ENCODE measurements at regions of chr18 and their contacts with region 1.

Region 1: DNA sequence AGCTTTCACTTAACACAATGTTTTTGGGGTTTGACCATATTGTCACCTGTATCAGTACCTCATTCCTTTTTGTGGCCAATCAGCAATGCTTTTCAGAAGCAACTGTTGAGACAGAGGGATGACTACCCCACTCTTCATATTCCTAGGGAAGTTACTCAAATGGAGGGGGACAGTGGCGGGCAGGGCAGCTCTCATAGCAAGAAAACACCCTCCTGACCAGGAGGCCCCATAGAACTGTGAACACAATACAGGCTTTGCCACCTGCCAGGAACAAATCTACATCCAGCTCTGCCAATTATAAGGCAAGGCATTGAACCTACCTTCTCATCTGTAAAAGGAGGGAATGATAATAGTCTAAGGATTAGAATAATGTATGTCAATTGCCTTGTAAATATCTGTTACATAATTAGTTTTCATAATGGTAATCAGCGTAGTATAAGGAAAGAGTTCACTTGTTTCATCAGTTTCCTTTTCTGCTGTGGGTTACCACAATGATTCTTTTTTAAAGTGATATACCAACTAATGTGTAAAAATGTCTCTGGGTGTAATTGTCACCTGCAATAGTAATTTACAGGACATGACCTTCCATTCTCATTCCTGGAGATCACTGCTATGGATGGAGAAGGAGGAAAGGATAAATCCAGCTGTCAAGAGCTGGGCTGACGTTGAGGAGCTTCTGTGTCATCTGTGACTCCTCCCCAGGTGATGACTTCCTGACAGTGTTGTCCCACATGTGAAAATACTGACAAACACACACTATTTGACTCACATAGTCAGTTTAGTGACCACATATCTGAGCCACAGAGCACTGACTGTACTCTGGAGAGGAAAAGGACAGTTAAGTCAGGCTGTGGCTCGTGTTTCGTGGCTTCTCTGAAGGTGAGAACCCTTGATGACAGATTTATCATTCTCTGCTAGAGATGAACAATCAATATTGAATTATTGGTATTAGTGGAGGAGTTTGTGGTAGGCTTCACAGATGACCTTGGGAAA is 13.5 kb downstream of the ALPK2 start:
- DNase-seq: peak in 8 of 9 donors; percentile 15 to 65 (median 50)
- ATAC-seq: peak; percentile 92
- H3K4me3 ChIP-seq: peak overlapping the region; percentile 11
- H3K4me3 Mint-ChIP-seq: peak overlapping the region; percentile 67 to 88 (median 81)
- H3K27ac ChIP-seq: peak overlapping the region; percentile 65
- H3K27ac Mint-ChIP-seq: peak overlapping the region; percentile 85 to 98 (median 95)
- H3K4me1 ChIP-seq: peaks cover 23 to 36% of the 10 kb centered on the region in 2 donors
- H3K4me1 Mint-ChIP-seq: peaks cover 32 to 58% (median 48%) of the 10 kb centered on the region in 7 donors
- H3K27me3 ChIP-seq: no peaks in the 10 kb centered on the region
- H3K27me3 Mint-ChIP-seq: peaks cover 0 to 29% (median 0%) of the 10 kb centered on the region in 5 donors

Region 2: DNA sequence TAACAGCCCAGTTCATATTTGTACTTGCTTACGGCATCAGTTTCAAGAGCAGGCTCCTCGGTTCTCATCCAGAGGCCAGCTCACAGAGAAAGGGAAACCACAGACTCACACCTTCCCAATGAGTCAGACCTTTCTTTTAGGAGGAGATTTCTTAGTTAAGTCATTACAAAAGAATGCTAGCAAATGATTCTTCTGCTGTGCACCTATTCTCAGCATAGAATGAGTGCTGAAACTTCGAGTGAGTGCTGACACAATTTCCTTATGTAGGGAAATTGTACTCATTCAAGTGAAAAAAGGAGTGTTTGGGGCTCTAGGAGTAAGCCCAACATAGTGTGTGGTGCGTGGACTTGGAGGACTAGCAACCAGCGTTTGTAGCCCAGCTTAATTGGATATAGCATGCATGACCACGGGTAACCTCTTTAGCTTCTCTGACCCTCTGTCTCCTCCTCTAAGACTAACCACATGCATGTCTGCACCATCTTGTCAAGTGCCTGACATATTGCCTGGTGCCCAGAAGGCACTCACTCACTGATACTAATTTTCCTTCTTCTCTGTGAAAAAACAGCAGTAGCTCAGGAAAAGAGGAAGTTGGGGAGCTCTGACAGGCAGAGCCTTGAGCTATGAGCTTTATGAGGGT is 73.5 kb before region 1 on chr18:
- CTCF ChIA-PET with region 1: interaction called, 3 read pairs
- POLR2A ChIA-PET with region 1: no interaction called
- intact Hi-C with region 1: loop called in 1 of 2 experiments (anchors 2 kb)
- DNase-seq: peak in 1 of 9 donors; percentile 52
- ATAC-seq: peak; percentile 79
- H3K4me3 ChIP-seq: no peak overlapping the region
- H3K4me3 Mint-ChIP-seq: peak overlapping the region in 1 of 10 donors; percentile 23
- H3K27ac ChIP-seq: no peak overlapping the region
- H3K27ac Mint-ChIP-seq: peak overlapping the region in 1 of 9 donors; percentile 29
- H3K4me1 ChIP-seq: peaks cover 7 to 14% of the 10 kb centered on the region in 2 donors
- H3K4me1 Mint-ChIP-seq: peaks cover 23 to 59% (median 40%) of the 10 kb centered on the region in 7 donors
- H3K27me3 ChIP-seq: no peaks in the 10 kb centered on the region
- H3K27me3 Mint-ChIP-seq: peaks cover 0 to 41% (median 0%) of the 10 kb centered on the region in 5 donors

Region 3: GRCh38 chr18:58649966-58650816 is 34.8 kb after region 1 on chr18:
- CTCF ChIA-PET with region 1: no interaction called
- POLR2A ChIA-PET with region 1: no interaction called
- intact Hi-C with region 1: loop called in 1 of 2 experiments (anchors 1 kb)
- DNase-seq: peak in 7 of 9 donors; percentile 21 to 65 (median 53)
- ATAC-seq: peak; percentile 87
- H3K4me3 ChIP-seq: no peak overlapping the region
- H3K4me3 Mint-ChIP-seq: peak overlapping the region; percentile 8 to 77 (median 60)
- H3K27ac ChIP-seq: no peak overlapping the region
- H3K27ac Mint-ChIP-seq: peak overlapping the region in 8 of 9 donors; percentile 17 to 88 (median 47)
- H3K4me1 ChIP-seq: peaks cover 15 to 27% of the 10 kb centered on the region in 2 donors
- H3K4me1 Mint-ChIP-seq: peaks cover 28 to 72% (median 58%) of the 10 kb centered on the region in 7 donors
- H3K27me3 ChIP-seq: no peaks in the 10 kb centered on the region
- H3K27me3 Mint-ChIP-seq: peaks cover 0 to 6% (median 0%) of the 10 kb centered on the region in 5 donors

Region 4: DNA sequence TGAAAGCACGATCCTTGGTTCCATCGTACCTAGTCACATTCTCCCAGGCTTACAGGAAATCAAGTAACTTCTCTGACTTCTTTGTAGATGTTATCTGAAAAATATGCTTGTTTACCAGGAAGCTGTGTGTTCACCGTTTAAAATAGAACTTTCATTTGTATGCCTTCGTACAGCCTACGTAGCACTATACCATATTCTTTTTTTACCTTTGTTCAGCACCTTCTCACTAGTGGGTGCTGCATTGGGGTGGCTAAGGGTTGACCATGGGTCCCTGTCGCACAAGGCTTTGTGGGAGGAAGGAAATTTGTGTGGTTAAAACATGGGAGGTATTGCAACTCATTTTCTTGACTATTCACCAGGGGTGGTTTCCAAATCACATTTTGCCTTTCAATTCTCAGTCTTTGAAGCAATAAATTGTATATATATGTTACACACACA is 72.5 kb after region 1 on chr18:
- CTCF ChIA-PET with region 1: no interaction called
- POLR2A ChIA-PET with region 1: no interaction called
- intact Hi-C with region 1: loop called in 1 of 2 experiments (anchors 2 kb)
- DNase-seq: peak in 8 of 9 donors; percentile 66 to 91 (median 86)
- ATAC-seq: peak; percentile 97
- H3K4me3 ChIP-seq: peak overlapping the region; percentile 15
- H3K4me3 Mint-ChIP-seq: peak overlapping the region; percentile 47 to 93 (median 87)
- H3K27ac ChIP-seq: peak overlapping the region; percentile 68
- H3K27ac Mint-ChIP-seq: peak overlapping the region in 8 of 9 donors; percentile 92 to 99 (median 96)
- H3K4me1 ChIP-seq: peaks cover 35 to 72% of the 10 kb centered on the region in 2 donors
- H3K4me1 Mint-ChIP-seq: peaks cover 43 to 89% (median 82%) of the 10 kb centered on the region in 7 donors
- H3K27me3 ChIP-seq: no peaks in the 10 kb centered on the region
- H3K27me3 Mint-ChIP-seq: no peaks in the 10 kb centered on the region

Region 5: GRCh38 chr18:58754544-58755068 is 139.2 kb after region 1 on chr18:
- CTCF ChIA-PET with region 1: interaction called, 4 read pairs
- POLR2A ChIA-PET with region 1: no interaction called
- intact Hi-C with region 1: loop called in 1 of 2 experiments (anchors 2 kb)
- DNase-seq: peak in 4 of 9 donors; percentile 11 to 20 (median 19)
- ATAC-seq: peak; percentile 66
- H3K4me3 ChIP-seq: no peak overlapping the region
- H3K4me3 Mint-ChIP-seq: peak overlapping the region in 3 of 10 donors; percentile 4 to 27 (median 20)
- H3K27ac ChIP-seq: no peak overlapping the region
- H3K27ac Mint-ChIP-seq: peak overlapping the region in 8 of 9 donors; percentile 7 to 81 (median 61)
- H3K4me1 ChIP-seq: peaks cover 0 to 30% of the 10 kb centered on the region in 2 donors
- H3K4me1 Mint-ChIP-seq: peaks cover 21 to 53% (median 45%) of the 10 kb centered on the region in 7 donors
- H3K27me3 ChIP-seq: no peaks in the 10 kb centered on the region
- H3K27me3 Mint-ChIP-seq: peaks cover 0 to 5% (median 0%) of the 10 kb centered on the region in 5 donors

Region 6: GRCh38 chr18:58937071-58937886 is 321.8 kb after region 1 on chr18:
- CTCF ChIA-PET with region 1: no interaction called
- POLR2A ChIA-PET with region 1: no interaction called
- intact Hi-C with region 1: no loop called
- DNase-seq: no peak
- ATAC-seq: no peak
- H3K4me3 ChIP-seq: no peak overlapping the region
- H3K4me3 Mint-ChIP-seq: no peak overlapping the region
- H3K27ac ChIP-seq: no peak overlapping the region
- H3K27ac Mint-ChIP-seq: no peak overlapping the region
- H3K4me1 ChIP-seq: no peaks in the 10 kb centered on the region
- H3K4me1 Mint-ChIP-seq: peaks cover 0 to 3% (median 0%) of the 10 kb centered on the region in 7 donors
- H3K27me3 ChIP-seq: no peaks in the 10 kb centered on the region
- H3K27me3 Mint-ChIP-seq: peaks cover 10 to 26% (median 18%) of the 10 kb centered on the region in 5 donors